CD4-positive, alpha-beta T cell (primary cell): ENCODE measurements at regions of chr2 and their contacts with region 1.

Region 1: GRCh38 chr2:219294356-219295351 is 14.5 kb downstream of the PTPRN start:
- DNase-seq: peak; percentile 78 to 96 (median 88)
- ATAC-seq: peak; percentile 94
- H3K4me3 ChIP-seq: peak overlapping the region; percentile 55
- H3K4me3 Mint-ChIP-seq: peak overlapping the region; percentile 67
- H3K27ac ChIP-seq: no peak overlapping the region
- H3K27ac Mint-ChIP-seq: peak overlapping the region; percentile 14
- H3K4me1 ChIP-seq: peaks cover 33% of the 10 kb centered on the region
- H3K4me1 Mint-ChIP-seq: peaks cover 32% of the 10 kb centered on the region
- H3K27me3 ChIP-seq: peaks cover 0 to 3% of the 10 kb centered on the region in 2 experiments
- H3K27me3 Mint-ChIP-seq: peaks cover 7% of the 10 kb centered on the region
- CTCF ChIP-seq: peak; percentile 99

Region 2: DNA sequence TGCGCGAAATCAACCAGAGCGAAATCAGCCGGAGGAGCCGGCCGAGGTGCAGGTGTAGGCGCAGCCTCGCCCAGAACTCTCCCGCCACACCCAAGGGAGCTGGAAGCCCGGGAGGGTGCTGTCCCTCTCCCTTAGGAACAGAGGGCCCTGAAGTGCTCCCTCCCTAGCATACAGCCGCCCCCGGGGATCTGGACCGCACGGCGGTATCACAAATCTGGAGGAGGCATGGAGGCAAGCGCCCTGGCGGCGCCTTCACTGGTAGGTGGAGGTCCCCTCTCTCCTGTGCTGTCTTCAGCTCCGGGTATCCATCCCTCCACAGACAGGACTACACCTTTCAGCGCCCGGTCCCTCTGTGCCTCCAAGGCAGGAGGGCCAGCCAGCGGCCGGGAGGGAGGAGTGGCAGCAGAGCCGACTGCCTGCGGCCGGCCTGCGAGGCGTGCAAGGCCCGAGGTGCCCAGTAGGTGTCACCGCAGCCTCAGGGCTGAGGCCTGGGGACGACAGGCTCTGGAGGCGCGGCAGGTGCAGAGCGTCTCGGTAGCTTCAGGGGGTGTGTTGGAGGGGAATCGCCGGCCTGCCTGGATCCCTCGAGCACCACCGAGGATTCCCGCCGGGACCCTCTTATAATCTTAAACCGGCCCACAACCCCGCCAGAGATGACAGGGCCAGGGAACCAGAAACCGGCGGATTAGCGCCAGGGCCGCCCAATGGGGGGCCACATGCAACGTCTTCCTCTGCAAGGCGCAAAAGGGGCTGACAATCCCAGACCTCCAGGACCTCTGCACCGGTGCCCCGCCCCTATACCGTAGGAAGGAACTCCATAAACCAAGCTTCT is 236.7 kb before region 1 on chr2:
- CTCF ChIA-PET with region 1: interaction called, 8 read pairs
- POLR2A ChIA-PET with region 1: interaction called, 3 read pairs
- intact Hi-C with region 1: loop called (anchors 2 to 5 kb)
- DNase-seq: peak; percentile 54 to 87 (median 72)
- ATAC-seq: peak; percentile 98
- H3K4me3 ChIP-seq: peak overlapping the region; percentile 2
- H3K4me3 Mint-ChIP-seq: peak overlapping the region; percentile 76
- H3K27ac ChIP-seq: no peak overlapping the region
- H3K27ac Mint-ChIP-seq: no peak overlapping the region
- H3K4me1 ChIP-seq: peaks cover 38% of the 10 kb centered on the region
- H3K4me1 Mint-ChIP-seq: peaks cover 20% of the 10 kb centered on the region
- H3K27me3 ChIP-seq: peaks cover 57 to 79% of the 10 kb centered on the region in 2 experiments
- H3K27me3 Mint-ChIP-seq: peaks cover 79% of the 10 kb centered on the region
- CTCF ChIP-seq: peak; percentile 97

Region 3: GRCh38 chr2:219160186-219161017 is 134.3 kb before region 1 on chr2 and contains the start of gene NHEJ1:
- CTCF ChIA-PET with region 1: interaction called, 29 read pairs
- POLR2A ChIA-PET with region 1: interaction called, 12 read pairs
- intact Hi-C with region 1: loop called (anchors 1 kb)
- DNase-seq: peak; percentile 82 to 97 (median 90)
- ATAC-seq: peak; percentile 90
- H3K4me3 ChIP-seq: peak within 1 kb of the TSS; percentile 78
- H3K4me3 Mint-ChIP-seq: peak within 1 kb of the TSS; percentile 94
- H3K27ac ChIP-seq: peak within 1 kb of the TSS; percentile 52 to 77
- H3K27ac Mint-ChIP-seq: peak within 1 kb of the TSS; percentile 94
- H3K4me1 ChIP-seq: peaks cover 17% of the 10 kb centered on the region
- H3K4me1 Mint-ChIP-seq: peaks cover 24% of the 10 kb centered on the region
- H3K27me3 ChIP-seq: no peaks in the 10 kb centered on the region
- H3K27me3 Mint-ChIP-seq: no peaks in the 10 kb centered on the region
- CTCF ChIP-seq: peak; percentile 97
- total RNA-seq, gene NHEJ1: 7.2 to 8.5 TPM

Region 4: GRCh38 chr2:219218732-219219701 is 75.6 kb before region 1 on chr2 and contains the start of gene ABCB6:
- CTCF ChIA-PET with region 1: interaction called, 16 read pairs
- POLR2A ChIA-PET with region 1: interaction called, 7 read pairs
- intact Hi-C with region 1: no loop called
- DNase-seq: peak; percentile 67 to 93 (median 86)
- ATAC-seq: peak; percentile 92
- H3K4me3 ChIP-seq: peak within 1 kb of the TSS; percentile 70
- H3K4me3 Mint-ChIP-seq: peak within 1 kb of the TSS; percentile 85
- H3K27ac ChIP-seq: peak within 1 kb of the TSS in 1 of 2 donors; percentile 56
- H3K27ac Mint-ChIP-seq: peak within 1 kb of the TSS; percentile 78
- H3K4me1 ChIP-seq: peaks cover 26% of the 10 kb centered on the region
- H3K4me1 Mint-ChIP-seq: peaks cover 21% of the 10 kb centered on the region
- H3K27me3 ChIP-seq: no peaks in the 10 kb centered on the region
- H3K27me3 Mint-ChIP-seq: no peaks in the 10 kb centered on the region
- CTCF ChIP-seq: no peak
- total RNA-seq, gene ABCB6: 2.6 to 3.1 TPM

Region 5: DNA sequence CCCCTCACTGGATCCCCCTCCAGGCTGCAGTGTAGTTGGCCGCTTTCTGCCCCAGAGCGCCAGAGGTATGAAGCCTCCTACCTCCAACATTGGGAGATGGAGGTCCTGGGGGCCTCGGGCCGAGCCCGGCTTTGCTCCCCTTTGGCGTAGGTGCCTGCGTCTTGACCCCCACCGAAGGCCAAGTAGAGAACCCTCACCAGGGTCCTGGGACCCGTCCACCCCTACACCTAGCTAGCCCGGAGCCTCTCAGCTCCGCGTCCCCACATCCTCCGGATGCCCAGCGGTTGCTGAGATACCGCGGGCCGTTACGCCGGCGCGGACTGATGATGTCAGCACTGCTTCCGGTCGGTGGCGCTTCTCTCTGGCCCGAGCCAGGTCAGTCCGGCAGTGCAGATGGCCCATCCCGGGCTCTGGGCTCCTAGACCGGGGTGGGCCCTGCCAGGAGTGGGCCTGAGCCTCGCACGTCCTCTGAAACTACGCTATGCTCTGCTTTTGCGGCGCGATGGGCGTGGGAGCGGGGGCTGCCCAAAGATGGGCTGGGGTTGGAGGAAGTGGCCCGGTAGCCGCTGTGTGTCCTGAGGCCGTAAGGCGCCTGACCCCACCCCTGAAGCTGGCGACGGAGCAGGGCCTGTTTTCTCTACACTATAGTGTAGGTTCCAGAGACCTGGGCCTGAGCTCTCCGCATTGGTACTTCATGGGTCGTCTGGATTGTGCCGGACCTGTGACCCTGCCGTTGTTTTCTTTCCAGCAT is 49.3 kb before region 1 on chr2 and contains the starts of genes GLB1L and STK16:
- CTCF ChIA-PET with region 1: interaction called, 30 read pairs
- POLR2A ChIA-PET with region 1: interaction called, 20 read pairs
- intact Hi-C with region 1: no loop called
- DNase-seq: peak; percentile 73 to 93 (median 84)
- ATAC-seq: peak; percentile 44
- H3K4me3 ChIP-seq: peak within 1 kb of the TSS; percentile 99
- H3K4me3 Mint-ChIP-seq: peak within 1 kb of the TSS; percentile 88
- H3K27ac ChIP-seq: peak within 1 kb of the TSS; percentile 95 to 98
- H3K27ac Mint-ChIP-seq: peak within 1 kb of the TSS; percentile 96
- H3K4me1 ChIP-seq: peaks cover 62% of the 10 kb centered on the region
- H3K4me1 Mint-ChIP-seq: peaks cover 74% of the 10 kb centered on the region
- H3K27me3 ChIP-seq: no peaks in the 10 kb centered on the region
- H3K27me3 Mint-ChIP-seq: no peaks in the 10 kb centered on the region
- CTCF ChIP-seq: no peak
- total RNA-seq, gene GLB1L: 2.4 to 3.0 TPM
- total RNA-seq, gene STK16: 11.2 to 14.1 TPM

Region 6: DNA sequence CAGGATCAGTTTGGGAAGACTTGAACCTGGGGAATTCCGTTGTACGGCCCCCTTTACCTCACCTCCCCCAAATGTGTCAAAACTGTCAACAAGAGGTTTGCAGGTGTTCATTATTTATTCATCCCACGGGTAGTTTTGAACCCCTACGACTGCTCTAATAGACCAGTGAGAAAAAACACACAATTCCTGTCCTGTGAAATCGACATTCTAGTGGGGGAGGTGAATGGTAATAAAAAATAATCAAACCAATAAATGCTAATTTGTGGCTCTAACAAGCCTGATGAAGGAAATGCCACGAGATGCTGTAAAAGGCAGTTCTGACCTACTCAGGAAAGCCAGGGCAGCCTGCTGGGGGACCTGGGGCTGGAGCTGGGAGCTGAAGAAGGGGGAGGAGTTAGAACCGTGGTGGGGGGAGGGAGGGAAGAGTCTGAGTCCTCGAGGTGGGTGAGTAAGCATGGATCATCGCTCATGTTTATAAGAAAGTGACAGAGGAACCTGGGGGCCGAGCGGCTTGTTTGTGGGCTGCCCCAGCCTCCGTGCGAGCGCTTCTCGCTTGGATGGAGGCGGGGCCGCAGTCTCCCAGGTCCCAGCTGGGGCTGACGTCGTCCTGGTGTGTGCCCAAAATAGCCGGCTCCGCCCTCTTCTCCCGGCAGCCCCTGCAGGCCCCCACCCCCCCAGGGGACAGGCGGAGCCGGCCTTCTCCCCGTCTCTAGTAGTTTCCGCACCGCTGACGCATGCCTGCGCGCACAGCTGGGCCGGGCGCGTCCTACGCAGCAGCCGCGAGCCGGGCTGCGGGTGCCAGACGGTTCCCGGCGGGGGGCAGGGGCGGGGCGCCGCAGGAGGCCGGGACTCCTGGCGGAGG is 15.8 kb before region 1 on chr2 and contains the start of gene DNAJB2:
- CTCF ChIA-PET with region 1: interaction called, 190 read pairs
- POLR2A ChIA-PET with region 1: interaction called, 55 read pairs
- intact Hi-C with region 1: loop called (anchors 1 kb)
- DNase-seq: peak; percentile 96 to 100 (median 98)
- ATAC-seq: peak; percentile 76
- H3K4me3 ChIP-seq: peak within 1 kb of the TSS; percentile 66
- H3K4me3 Mint-ChIP-seq: peak within 1 kb of the TSS; percentile 97
- H3K27ac ChIP-seq: peak within 1 kb of the TSS; percentile 95 to 97
- H3K27ac Mint-ChIP-seq: peak within 1 kb of the TSS; percentile 98
- H3K4me1 ChIP-seq: peaks cover 43% of the 10 kb centered on the region
- H3K4me1 Mint-ChIP-seq: peaks cover 43% of the 10 kb centered on the region
- H3K27me3 ChIP-seq: no peaks in the 10 kb centered on the region
- H3K27me3 Mint-ChIP-seq: no peaks in the 10 kb centered on the region
- CTCF ChIP-seq: no peak
- total RNA-seq, gene DNAJB2: 151 to 161 TPM

Region 7: GRCh38 chr2:219433666-219434467 is 139.2 kb after region 1 on chr2:
- CTCF ChIA-PET with region 1: no interaction called
- POLR2A ChIA-PET with region 1: no interaction called
- intact Hi-C with region 1: no loop called
- DNase-seq: peak in 4 of 14 experiments; percentile 21 to 46 (median 39)
- ATAC-seq: peak; percentile 52
- H3K4me3 ChIP-seq: no peak overlapping the region
- H3K4me3 Mint-ChIP-seq: no peak overlapping the region
- H3K27ac ChIP-seq: no peak overlapping the region
- H3K27ac Mint-ChIP-seq: no peak overlapping the region
- H3K4me1 ChIP-seq: peaks cover 10% of the 10 kb centered on the region
- H3K4me1 Mint-ChIP-seq: no peaks in the 10 kb centered on the region
- H3K27me3 ChIP-seq: peaks cover 22 to 27% of the 10 kb centered on the region in 2 experiments
- H3K27me3 Mint-ChIP-seq: peaks cover 32% of the 10 kb centered on the region
- CTCF ChIP-seq: no peak